PC-9 (cell line): ENCODE measurements at regions of chr22 and their contacts with region 1.

Region 1: DNA sequence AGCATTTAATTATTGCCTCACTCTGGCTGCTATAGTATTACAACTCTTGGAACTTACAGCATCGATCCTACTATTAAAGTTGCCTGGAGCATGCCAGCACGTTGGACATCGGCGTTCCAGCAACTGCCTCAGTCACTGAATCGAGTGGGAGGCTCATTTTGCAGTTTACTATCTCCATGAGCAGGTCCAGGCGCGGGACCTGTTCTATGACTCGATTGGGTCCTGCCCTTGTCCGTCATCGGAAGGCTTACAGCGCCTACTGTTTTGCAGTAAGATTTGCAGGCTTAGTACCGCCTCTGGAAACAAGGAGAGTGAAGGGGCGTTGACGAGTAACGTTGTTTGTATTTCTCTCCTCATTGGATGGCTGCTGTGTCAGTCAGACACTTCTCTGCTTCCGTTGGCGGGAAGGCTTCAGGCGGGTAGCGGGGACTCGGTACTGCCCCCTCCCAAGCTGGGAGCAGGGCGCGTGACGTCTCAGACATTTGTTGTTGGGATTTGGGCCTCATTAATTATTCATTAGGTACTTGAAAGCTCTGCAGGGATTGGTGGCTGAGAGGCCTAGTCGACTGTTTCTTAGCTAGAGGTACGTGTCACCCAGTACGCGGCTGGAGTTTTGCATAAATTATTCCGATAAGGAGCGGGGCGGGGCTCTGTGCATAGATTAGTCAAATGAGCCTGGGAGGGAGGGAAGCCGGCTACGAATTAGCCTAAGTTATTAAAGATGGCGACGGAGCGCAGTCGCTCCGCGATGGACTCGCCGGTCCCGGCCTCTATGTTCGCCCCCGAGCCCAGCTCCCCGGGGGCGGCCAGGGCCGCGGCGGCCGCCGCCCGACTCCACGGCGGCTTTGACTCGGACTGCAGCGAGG is at the start of gene GTPBP1:
- DNase-seq: peak; percentile 99 to 100
- H3K4me3 ChIP-seq: peak within 1 kb of the TSS; percentile 98
- H3K27ac ChIP-seq: peak within 1 kb of the TSS; percentile 88
- H3K4me1 ChIP-seq: peaks cover 46% of the 10 kb centered on the region
- H3K27me3 ChIP-seq: no peaks in the 10 kb centered on the region
- CTCF ChIP-seq: no peak
- total RNA-seq, gene GTPBP1: 79.3 and 94.7 TPM in 2 replicates

Region 2: DNA sequence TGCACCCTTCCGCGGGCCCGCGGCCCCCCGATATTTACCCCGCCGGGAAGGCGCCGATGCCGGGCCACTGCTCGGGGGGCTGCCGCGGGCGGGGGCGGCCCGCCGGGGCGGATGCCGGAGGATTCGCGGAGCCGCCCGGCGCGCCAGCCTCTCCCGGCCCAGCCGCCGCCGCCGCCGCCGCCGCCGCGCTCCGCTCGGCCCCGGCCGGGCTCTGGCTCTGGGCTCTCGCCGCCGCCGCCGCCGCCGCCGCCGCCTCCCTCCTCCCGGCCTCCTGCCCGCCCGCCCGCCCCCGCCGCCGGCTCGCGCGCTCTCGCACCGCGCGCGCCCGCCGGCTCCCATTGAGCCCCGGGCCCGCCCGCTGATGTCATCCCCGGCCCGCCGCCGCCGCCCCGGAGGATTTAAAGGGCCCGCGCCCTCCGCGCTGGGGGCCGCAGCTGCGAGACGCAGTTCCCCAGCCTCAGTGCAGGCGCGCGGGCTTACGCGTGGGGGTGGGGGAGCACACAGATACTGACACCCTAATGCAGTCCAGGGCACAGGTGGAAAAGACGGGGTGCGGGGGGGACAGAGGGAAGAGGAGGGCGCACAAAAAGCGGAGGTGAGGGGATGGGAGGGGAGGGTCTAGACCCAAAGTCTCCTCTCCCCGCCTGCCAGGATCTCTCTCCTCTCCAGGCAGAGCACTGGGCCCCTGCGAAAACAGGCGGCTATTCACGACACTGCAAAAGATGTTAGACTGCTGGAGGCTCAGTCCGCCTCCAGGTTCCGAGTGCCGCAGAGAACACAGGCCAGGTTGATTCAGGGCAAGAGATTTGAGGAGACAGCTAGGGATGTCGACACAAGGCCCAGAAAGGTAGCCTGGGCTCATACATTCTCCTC is 388.1 kb before region 1 on chr22 and contains the start of gene CSNK1E:
- CTCF ChIA-PET with region 1: no interaction called
- POLR2A ChIA-PET with region 1: no interaction called
- intact Hi-C with region 1: loop called (anchors 10 kb)
- DNase-seq: peak; percentile 45 to 81
- H3K4me3 ChIP-seq: peak within 1 kb of the TSS; percentile 85
- H3K27ac ChIP-seq: peak within 1 kb of the TSS; percentile 90
- H3K4me1 ChIP-seq: peaks cover 45% of the 10 kb centered on the region
- H3K27me3 ChIP-seq: no peaks in the 10 kb centered on the region
- CTCF ChIP-seq: no peak
- total RNA-seq, gene CSNK1E: 331 and 348 TPM in 2 replicates

Region 3: DNA sequence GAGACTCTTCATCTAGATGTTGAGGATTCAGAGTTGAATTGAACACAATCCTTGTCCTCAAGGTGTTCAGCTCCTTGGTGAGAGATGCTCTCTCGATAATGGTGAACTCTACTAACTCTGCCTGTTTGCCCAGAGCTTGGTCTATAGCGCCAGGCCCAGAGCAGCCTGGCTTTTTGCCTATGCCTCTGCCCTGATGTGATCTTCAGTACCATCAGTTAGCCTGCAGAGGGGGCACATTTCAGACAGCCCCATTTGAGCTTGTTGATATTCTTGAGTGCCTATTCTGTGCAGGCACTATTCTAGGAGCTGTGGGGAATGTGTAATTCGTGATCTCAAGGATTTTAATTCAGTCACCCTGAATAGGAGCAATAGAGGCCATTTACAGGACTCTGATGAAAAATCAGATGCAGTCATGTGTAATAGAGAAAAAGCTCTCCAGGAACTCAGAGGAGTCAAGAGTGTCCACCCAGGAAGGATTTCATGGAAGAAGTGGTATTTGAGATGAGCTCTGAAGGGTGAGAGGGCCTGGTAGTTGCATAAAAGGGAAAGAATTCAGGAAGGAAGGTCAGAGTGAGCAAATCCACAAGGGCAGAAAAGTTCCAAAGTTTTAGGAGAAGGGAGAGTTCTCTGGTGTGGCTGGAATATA is 19.6 kb after region 1 on chr22:
- CTCF ChIA-PET with region 1: interaction called, 7 read pairs
- POLR2A ChIA-PET with region 1: interaction called, 14 read pairs
- intact Hi-C with region 1: no loop called
- DNase-seq: no peak
- H3K4me3 ChIP-seq: no peak overlapping the region
- H3K27ac ChIP-seq: no peak overlapping the region
- H3K4me1 ChIP-seq: no peaks in the 10 kb centered on the region
- H3K27me3 ChIP-seq: no peaks in the 10 kb centered on the region
- CTCF ChIP-seq: peak; percentile 79

Region 4: GRCh38 chr22:38733329-38733723 is 27.9 kb after region 1 on chr22:
- CTCF ChIA-PET with region 1: no interaction called
- POLR2A ChIA-PET with region 1: interaction called, 14 read pairs
- intact Hi-C with region 1: no loop called
- DNase-seq: peak in 1 of 2 experiments; percentile 52
- H3K4me3 ChIP-seq: no peak overlapping the region
- H3K27ac ChIP-seq: 0 out of 2 replicates have a peak overlapping the region, but pooled peaks have one; percentile 33
- H3K4me1 ChIP-seq: peaks cover 7% of the 10 kb centered on the region; the same call in 1 of the 2 replicates
- H3K27me3 ChIP-seq: no peaks in the 10 kb centered on the region
- CTCF ChIP-seq: peak; percentile 94

Region 5: GRCh38 chr22:38755911-38756532 is 50.6 kb after region 1 on chr22 and contains the start of gene SUN2:
- CTCF ChIA-PET with region 1: no interaction called
- POLR2A ChIA-PET with region 1: interaction called, 3 read pairs
- intact Hi-C with region 1: loop called (anchors 2 kb)
- DNase-seq: peak; percentile 71 to 90
- H3K4me3 ChIP-seq: peak within 1 kb of the TSS; percentile 89
- H3K27ac ChIP-seq: peak within 1 kb of the TSS; percentile 87
- H3K4me1 ChIP-seq: peaks cover 55% of the 10 kb centered on the region
- H3K27me3 ChIP-seq: no peaks in the 10 kb centered on the region
- CTCF ChIP-seq: no peak
- total RNA-seq, gene SUN2: 169 and 220 TPM in 2 replicates